PC-9 (cell line): ENCODE measurements at regions of chr17 and their contacts with region 1.

Region 1: GRCh38 chr17:82030470-82031302 is 792 bp upstream of the RAC3 start:
- DNase-seq: peak; percentile 66 to 92
- H3K4me3 ChIP-seq: peak overlapping the region; percentile 65
- H3K27ac ChIP-seq: no peak overlapping the region
- H3K4me1 ChIP-seq: no peaks in the 10 kb centered on the region
- H3K27me3 ChIP-seq: no peaks in the 10 kb centered on the region
- CTCF ChIP-seq: peak; percentile 76

Region 2: GRCh38 chr17:81566461-81567126 is 464.1 kb before region 1 on chr17:
- CTCF ChIA-PET with region 1: no interaction called
- POLR2A ChIA-PET with region 1: no interaction called
- intact Hi-C with region 1: no loop called
- DNase-seq: peak; percentile 74 to 81
- H3K4me3 ChIP-seq: peak overlapping the region; percentile 34; the same call in 1 of the 2 replicates
- H3K27ac ChIP-seq: peak overlapping the region; percentile 63
- H3K4me1 ChIP-seq: peaks cover 47% of the 10 kb centered on the region
- H3K27me3 ChIP-seq: no peaks in the 10 kb centered on the region
- CTCF ChIP-seq: no peak

Region 3: DNA sequence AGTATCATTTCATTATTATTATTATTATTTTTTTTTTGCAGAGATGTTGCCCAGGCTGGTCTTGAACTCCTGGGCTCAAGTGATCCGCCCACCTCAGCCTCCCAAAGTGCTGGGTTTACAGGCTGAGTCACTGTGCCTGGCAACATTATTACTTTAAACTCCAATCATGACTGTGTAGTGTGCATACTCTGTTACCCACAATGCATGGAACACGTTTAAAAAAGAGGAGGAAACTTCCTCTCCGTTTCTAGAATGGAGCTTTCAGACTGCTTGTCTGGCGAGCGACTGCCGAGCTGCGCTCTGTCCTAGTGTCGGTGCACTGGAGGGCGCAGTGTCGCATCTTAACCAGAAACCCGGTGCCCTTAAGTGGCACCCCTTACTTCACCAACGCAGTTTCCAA is 89.5 kb after region 1 on chr17:
- CTCF ChIA-PET with region 1: no interaction called
- POLR2A ChIA-PET with region 1: no interaction called
- intact Hi-C with region 1: no loop called
- DNase-seq: no peak
- H3K4me3 ChIP-seq: no peak overlapping the region
- H3K27ac ChIP-seq: no peak overlapping the region
- H3K4me1 ChIP-seq: no peaks in the 10 kb centered on the region
- H3K27me3 ChIP-seq: no peaks in the 10 kb centered on the region
- CTCF ChIP-seq: no peak

Region 4: DNA sequence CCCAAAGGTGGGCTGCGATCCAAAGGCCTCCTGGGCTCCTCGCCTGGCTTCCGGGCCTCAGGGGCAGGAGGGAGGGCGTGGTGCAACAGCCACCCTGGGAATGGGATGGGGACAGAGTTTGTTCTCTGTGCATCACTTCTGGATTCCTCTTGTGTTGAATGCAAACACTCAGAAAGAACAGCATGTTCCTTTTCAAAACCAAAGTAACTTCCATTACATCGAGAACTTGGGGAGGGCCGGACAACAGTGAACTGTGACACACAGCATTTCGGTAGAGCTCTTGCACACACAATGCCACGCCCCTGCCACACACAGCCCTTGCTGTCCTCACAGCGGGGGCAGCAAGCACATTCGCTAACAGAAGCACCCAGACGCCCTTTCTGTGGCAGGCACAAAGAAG is 103.4 kb after region 1 on chr17:
- CTCF ChIA-PET with region 1: interaction called, 10 read pairs
- POLR2A ChIA-PET with region 1: no interaction called
- intact Hi-C with region 1: no loop called
- DNase-seq: no peak
- H3K4me3 ChIP-seq: no peak overlapping the region
- H3K27ac ChIP-seq: no peak overlapping the region
- H3K4me1 ChIP-seq: no peaks in the 10 kb centered on the region
- H3K27me3 ChIP-seq: no peaks in the 10 kb centered on the region
- CTCF ChIP-seq: no peak

Region 5: GRCh38 chr17:82153745-82154375 is 123.2 kb after region 1 on chr17:
- CTCF ChIA-PET with region 1: no interaction called
- POLR2A ChIA-PET with region 1: no interaction called
- intact Hi-C with region 1: loop called (anchors 1 kb)
- DNase-seq: peak; percentile 39 to 82
- H3K4me3 ChIP-seq: no peak overlapping the region
- H3K27ac ChIP-seq: no peak overlapping the region
- H3K4me1 ChIP-seq: no peaks in the 10 kb centered on the region
- H3K27me3 ChIP-seq: no peaks in the 10 kb centered on the region
- CTCF ChIP-seq: peak; percentile 81